PC-9 (cell line): ENCODE measurements at regions of chr10 and their contacts with region 1.

Region 1: DNA sequence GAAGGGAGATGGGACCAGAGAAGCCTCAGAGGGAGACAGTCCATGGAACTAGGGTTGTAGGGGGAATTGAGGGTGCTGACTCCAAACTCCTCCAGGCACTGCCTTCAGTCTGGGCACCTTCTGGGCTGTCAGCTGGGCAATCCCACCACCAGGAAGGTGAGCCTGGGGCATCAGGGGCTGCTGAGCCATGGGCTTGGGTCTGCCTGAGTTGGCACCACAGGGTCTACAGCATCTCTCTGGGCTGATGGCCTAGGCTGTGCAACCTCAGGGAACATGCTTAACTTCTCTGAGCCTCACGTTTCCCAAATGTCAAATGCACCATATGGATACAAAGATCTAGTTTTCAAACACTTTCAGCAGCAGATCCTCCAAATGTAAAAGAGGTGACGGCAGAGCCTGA is 46.8 kb upstream of the PRLHR start:
- DNase-seq: no peak
- H3K4me3 ChIP-seq: no peak overlapping the region
- H3K27ac ChIP-seq: no peak overlapping the region
- H3K4me1 ChIP-seq: no peaks in the 10 kb centered on the region
- H3K27me3 ChIP-seq: peaks cover 45% of the 10 kb centered on the region
- CTCF ChIP-seq: no peak

Region 2: DNA sequence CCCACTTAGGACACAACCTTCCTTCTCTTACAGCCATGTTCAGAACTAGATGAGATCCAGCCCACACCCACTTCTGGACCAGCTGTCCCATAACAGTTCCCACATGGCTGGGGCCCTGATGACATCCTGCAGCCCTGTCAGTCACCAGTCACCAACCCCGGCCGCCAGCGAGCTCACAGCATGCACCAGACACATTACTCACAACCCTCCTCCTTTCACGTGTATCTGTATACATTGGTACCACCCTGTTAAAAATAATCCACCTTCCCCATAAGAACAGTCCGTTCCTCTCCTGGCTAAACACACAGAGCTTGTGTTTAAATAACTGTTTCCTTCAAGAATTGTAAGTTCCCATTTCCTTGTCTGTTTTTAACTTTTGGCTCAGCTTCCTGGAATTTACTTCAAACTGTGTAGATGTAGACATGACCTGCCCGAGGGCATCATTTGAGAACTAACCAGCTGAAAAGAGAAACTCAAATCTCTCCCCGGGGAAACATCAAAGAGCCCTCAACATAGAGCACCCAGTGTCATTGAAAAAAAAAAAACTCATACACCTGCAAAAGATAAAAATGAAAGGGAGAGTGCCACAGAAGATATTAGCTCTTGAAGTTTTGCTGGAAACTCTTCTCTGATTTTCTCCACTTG is 20.8 kb before region 1 on chr10:
- CTCF ChIA-PET with region 1: no interaction called
- POLR2A ChIA-PET with region 1: interaction called, 12 read pairs
- intact Hi-C with region 1: no loop called
- DNase-seq: peak in 1 of 2 experiments; percentile 62
- H3K4me3 ChIP-seq: no peak overlapping the region
- H3K27ac ChIP-seq: no peak overlapping the region
- H3K4me1 ChIP-seq: no peaks in the 10 kb centered on the region
- H3K27me3 ChIP-seq: peaks cover 14% of the 10 kb centered on the region; the same call in 1 of the 2 replicates
- CTCF ChIP-seq: no peak

Region 3: DNA sequence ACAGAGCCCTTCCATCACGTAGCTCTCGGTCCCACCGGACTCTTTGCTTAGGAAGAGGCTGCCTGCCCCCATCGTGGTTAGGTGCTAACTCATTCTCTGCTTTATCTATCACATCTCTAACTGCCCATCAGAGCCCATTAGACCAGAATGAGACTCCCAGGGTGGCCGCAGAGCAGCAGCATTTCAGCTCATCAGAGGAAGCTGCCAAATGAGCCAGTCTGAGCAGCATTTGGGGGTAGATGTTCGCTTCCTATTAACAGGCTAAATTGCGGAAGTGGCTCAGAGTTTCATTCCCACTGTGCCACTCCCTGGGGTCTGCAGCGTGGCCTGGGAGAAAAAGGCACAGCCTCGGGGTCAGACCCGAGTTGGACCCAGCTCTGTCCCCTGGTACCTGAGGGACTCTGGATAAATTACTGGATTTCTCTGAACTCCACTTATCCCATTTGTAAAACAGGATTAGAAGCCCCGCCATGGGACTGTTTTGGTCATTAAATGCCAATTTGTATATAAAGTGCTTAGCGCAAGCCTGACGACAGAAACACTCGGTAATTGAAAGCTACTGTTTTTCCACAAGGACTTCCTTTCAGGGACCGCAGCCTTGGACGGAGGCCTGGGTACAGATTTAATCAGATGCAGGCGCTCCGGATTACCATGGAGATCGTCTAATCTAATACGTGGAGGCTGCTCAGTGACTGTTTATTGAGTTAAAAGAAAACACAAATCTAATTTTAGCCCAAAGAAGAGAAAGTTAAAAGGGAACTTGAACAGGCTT is 27.0 kb after region 1 on chr10:
- CTCF ChIA-PET with region 1: no interaction called
- POLR2A ChIA-PET with region 1: no interaction called
- intact Hi-C with region 1: no loop called
- DNase-seq: no peak
- H3K4me3 ChIP-seq: no peak overlapping the region
- H3K27ac ChIP-seq: no peak overlapping the region
- H3K4me1 ChIP-seq: no peaks in the 10 kb centered on the region
- H3K27me3 ChIP-seq: no peaks in the 10 kb centered on the region
- CTCF ChIP-seq: no peak

Region 4: GRCh38 chr10:118687472-118687871 is 45.2 kb after region 1 on chr10:
- CTCF ChIA-PET with region 1: no interaction called
- POLR2A ChIA-PET with region 1: no interaction called
- intact Hi-C with region 1: no loop called
- DNase-seq: no peak
- H3K4me3 ChIP-seq: no peak overlapping the region
- H3K27ac ChIP-seq: no peak overlapping the region
- H3K4me1 ChIP-seq: no peaks in the 10 kb centered on the region
- H3K27me3 ChIP-seq: no peaks in the 10 kb centered on the region
- CTCF ChIP-seq: no peak